ENCODE measurements at regions of chr2 and their contacts with region 1.

Region 1: GRCh38 chr2:74919827-74920226 is 38.6 kb upstream of the POLE4 start:
- DNase-seq: peak; percentile 36 to 76
- ATAC-seq: peak; percentile 20 to 62 (median 52)
- H3K4me3 ChIP-seq: peak overlapping the region in 5 of 10 donors; percentile 22 to 37 (median 30)
- H3K27ac ChIP-seq: no peak overlapping the region
- H3K4me1 ChIP-seq: peaks cover 0 to 23% (median 6%) of the 10 kb centered on the region in 9 donors
- H3K27me3 ChIP-seq: peaks cover 0 to 35% (median 22%) of the 10 kb centered on the region in 7 donors
- CTCF ChIP-seq: peak; percentile 71 to 93 (median 89)

Region 2: GRCh38 chr2:74982577-74982976 is 62.8 kb after region 1 on chr2:
- intact Hi-C with region 1: no loop called
- DNase-seq: no peak
- ATAC-seq: no peak
- H3K4me3 ChIP-seq: no peak overlapping the region
- H3K27ac ChIP-seq: no peak overlapping the region
- H3K4me1 ChIP-seq: peaks cover 0 to 10% (median 0%) of the 10 kb centered on the region in 9 donors
- H3K27me3 ChIP-seq: no peaks in the 10 kb centered on the region
- CTCF ChIP-seq: no peak

Region 3: GRCh38 chr2:75064691-75065396 is 145.0 kb after region 1 on chr2:
- intact Hi-C with region 1: loop called in 3 of 10 experiments (anchors 2 to 10 kb)
- DNase-seq: peak in 1 of 2 donors; percentile 45
- ATAC-seq: no peak
- H3K4me3 ChIP-seq: no peak overlapping the region
- H3K27ac ChIP-seq: no peak overlapping the region
- H3K4me1 ChIP-seq: no peaks in the 10 kb centered on the region
- H3K27me3 ChIP-seq: no peaks in the 10 kb centered on the region
- CTCF ChIP-seq: peak; percentile 50 to 91 (median 66)

Region 4: GRCh38 chr2:75290600-75291150 is 370.8 kb after region 1 on chr2:
- intact Hi-C with region 1: loop called in 1 of 10 experiments (anchors 10 kb)
- DNase-seq: no peak
- ATAC-seq: no peak
- H3K4me3 ChIP-seq: no peak overlapping the region
- H3K27ac ChIP-seq: no peak overlapping the region
- H3K4me1 ChIP-seq: peaks cover 0 to 13% (median 0%) of the 10 kb centered on the region in 9 donors
- H3K27me3 ChIP-seq: no peaks in the 10 kb centered on the region
- CTCF ChIP-seq: peak in 2 of 9 donors; percentile 6 to 13

Region 5: GRCh38 chr2:75375646-75376582 is 456.1 kb after region 1 on chr2:
- intact Hi-C with region 1: no loop called
- DNase-seq: no peak
- ATAC-seq: no peak
- H3K4me3 ChIP-seq: no peak overlapping the region
- H3K27ac ChIP-seq: no peak overlapping the region
- H3K4me1 ChIP-seq: no peaks in the 10 kb centered on the region
- H3K27me3 ChIP-seq: peaks cover 0 to 15% (median 0%) of the 10 kb centered on the region in 7 donors
- CTCF ChIP-seq: no peak

Region 6: GRCh38 chr2:75608684-75609333 is 689.0 kb after region 1 on chr2:
- intact Hi-C with region 1: loop called in 3 of 10 experiments (anchors 10 kb)
- DNase-seq: peak; percentile 35 to 55
- ATAC-seq: peak; percentile 70 to 90 (median 82)
- H3K4me3 ChIP-seq: peak overlapping the region in 6 of 10 donors; percentile 12 to 40 (median 20)
- H3K27ac ChIP-seq: no peak overlapping the region
- H3K4me1 ChIP-seq: peaks cover 0 to 9% (median 4%) of the 10 kb centered on the region in 9 donors
- H3K27me3 ChIP-seq: peaks cover 0 to 62% (median 29%) of the 10 kb centered on the region in 7 donors
- CTCF ChIP-seq: peak; percentile 83 to 97 (median 94)

Region 7: GRCh38 chr2:75627895-75628504 is 708.2 kb after region 1 on chr2:
- intact Hi-C with region 1: loop called in 2 of 10 experiments (anchors 10 kb)
- DNase-seq: peak; percentile 56 to 62
- ATAC-seq: peak in 4 of 8 donors; percentile 65 to 80 (median 71)
- H3K4me3 ChIP-seq: no peak overlapping the region
- H3K27ac ChIP-seq: no peak overlapping the region
- H3K4me1 ChIP-seq: peaks cover 0 to 14% (median 0%) of the 10 kb centered on the region in 9 donors
- H3K27me3 ChIP-seq: peaks cover 0 to 15% (median 0%) of the 10 kb centered on the region in 7 donors
- CTCF ChIP-seq: peak; percentile 65 to 94 (median 92)